Dendritic cell treated with granulocyte-macrophage colony-stimulating factor and Interleukin-4, amounts not matched to agents 40 ng/mL and 50 ng/mL, for 4 days (primary cell): ENCODE measurements at regions of chr3 and their contacts with region 1.

Region 1: DNA sequence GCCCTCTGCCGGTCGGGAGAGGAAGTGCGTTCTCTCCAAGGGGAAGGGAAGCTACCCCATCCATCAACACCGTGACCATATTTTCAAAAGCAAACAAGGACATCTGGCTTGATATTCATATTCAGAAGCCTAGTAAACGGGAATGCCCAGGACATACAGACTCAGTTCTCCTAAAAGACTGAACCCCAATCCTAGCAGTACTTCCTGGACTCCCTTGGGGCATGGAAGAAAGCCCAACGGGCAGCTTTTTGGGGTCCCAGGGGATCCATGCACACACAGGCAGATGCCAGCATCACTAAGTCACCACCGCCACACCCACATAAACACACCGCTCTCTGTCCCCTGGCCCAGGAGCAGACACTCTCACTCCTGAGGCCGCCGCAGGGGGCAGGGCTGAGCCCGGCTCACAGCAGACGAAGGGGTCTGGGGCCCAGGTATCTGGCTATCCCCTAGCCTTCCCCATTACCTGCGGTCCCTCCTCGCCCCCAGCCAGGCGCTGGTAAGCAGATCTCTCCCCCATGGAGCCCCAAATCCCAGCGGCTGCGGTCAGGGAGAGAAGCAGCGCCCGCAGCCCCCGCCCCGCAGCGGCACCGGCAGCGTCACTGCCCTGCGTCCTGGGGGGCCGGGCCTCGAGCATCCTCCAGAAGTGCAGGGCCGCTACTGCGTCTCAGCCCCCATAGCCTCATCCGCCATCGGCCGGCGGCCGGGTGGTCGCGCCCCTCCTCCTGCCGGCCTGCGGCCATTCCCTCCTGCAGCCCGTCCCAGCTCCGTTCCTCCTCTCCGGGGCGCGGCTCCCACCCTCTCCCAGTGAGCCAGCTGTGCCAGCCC is 13.4 kb downstream of the TNK2 start:
- H3K4me3 Mint-ChIP-seq: peak overlapping the region; percentile 84
- H3K27ac Mint-ChIP-seq: peak overlapping the region; percentile 87
- H3K4me1 Mint-ChIP-seq: peaks cover 81% of the 10 kb centered on the region
- H3K27me3 Mint-ChIP-seq: no peaks in the 10 kb centered on the region

Region 2: GRCh38 chr3:195863121-195864006 is 31.6 kb before region 1 on chr3:
- intact Hi-C with region 1: loop called (anchors 1 kb)
- H3K4me3 Mint-ChIP-seq: no peak overlapping the region
- H3K27ac Mint-ChIP-seq: no peak overlapping the region
- H3K4me1 Mint-ChIP-seq: peaks cover 15% of the 10 kb centered on the region
- H3K27me3 Mint-ChIP-seq: peaks cover 16% of the 10 kb centered on the region

Region 3: DNA sequence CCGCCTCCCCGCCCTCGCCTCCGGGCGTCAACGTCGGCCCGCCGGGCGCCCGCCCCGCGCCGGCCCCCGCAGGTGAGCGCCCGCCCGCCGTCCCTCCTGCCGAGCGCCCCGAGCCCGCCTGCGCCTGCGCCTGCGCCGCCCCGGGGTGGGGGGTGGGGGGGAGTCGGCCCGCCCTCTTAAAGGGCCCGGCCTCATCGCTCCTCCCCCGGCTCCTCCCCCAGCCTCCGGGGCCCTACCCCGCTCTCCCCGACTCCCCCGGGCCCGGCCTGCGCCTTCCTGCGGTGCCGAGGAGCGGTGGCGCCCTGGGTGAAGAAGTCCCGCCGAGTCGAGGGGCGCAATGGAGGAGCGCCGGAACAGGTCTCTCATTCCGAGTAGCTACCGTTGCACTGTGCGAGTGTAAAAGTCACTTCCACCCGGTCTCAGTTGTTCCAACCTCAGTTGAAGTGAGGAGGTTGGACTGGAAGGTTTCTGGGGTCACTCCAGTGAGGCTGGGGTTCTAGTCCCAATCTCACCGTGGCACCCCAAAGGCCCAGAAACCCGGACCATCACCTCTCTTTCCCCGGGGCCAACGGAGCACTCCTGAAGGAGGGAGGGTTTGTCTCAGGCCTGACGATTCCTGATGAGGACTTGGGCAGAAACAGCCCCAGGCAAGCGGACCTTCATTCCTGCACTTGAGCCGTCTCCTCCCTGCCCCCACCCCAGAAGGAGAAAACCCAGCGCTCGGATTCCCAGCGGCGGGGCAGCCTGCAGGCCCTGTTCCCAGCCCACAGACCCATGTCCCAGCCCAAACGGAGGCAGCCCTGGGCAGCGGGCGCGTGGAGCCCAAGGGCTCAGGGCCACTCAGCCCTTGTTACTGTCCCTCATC is 14.9 kb after region 1 on chr3:
- intact Hi-C with region 1: loop called (anchors 1 kb)
- H3K4me3 Mint-ChIP-seq: peak overlapping the region; percentile 71
- H3K27ac Mint-ChIP-seq: peak overlapping the region; percentile 66
- H3K4me1 Mint-ChIP-seq: peaks cover 58% of the 10 kb centered on the region
- H3K27me3 Mint-ChIP-seq: peaks cover 3% of the 10 kb centered on the region

Region 4: DNA sequence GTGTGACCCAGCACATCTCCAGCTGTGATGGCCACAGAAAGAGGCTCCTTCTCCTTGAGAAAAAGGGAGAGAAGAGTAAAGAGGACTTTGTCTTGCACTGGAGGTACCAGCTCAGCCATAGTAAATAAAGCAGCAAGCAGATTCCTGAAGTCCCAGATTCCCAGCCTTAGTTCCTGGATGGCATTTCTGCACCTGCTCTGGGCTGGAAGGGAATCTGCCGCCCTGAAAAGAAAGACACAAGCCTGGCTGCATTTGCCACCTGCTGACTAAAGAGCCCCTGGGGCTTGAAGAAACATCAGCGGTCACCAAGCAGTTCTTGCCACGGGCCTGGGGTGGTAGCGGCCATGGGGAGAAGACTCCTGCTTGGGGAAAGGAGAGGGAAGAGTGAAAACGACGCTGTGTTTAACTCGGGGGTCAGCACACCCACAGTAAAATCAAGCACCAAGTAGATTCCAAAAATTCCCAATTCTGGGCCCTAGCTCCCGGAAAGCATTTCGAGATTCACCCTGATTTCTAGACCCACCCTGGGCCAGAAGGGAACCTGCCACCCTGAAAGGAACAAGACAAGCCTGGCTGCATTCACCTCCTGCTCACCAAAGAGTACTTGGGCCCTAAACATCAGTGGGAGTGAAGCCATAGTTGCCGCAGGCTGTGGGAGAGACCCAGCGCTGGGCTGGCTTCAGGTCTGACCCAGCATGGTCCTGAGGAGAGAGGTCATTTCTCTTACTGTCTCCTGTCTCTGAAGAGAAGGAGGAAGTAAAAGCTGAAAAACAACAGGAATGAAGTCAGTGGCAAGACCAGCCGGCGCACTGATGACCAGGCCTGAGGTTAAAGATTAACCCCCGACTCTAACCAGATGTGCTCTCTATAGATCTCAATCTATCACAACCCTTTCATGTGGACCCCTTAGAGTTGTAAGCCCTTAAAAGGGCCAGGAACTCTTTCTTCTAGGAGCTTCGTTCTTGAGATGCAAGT is 37.7 kb after region 1 on chr3:
- intact Hi-C with region 1: no loop called
- H3K4me3 Mint-ChIP-seq: no peak overlapping the region
- H3K27ac Mint-ChIP-seq: no peak overlapping the region
- H3K4me1 Mint-ChIP-seq: peaks cover 16% of the 10 kb centered on the region
- H3K27me3 Mint-ChIP-seq: peaks cover 5% of the 10 kb centered on the region

Region 5: DNA sequence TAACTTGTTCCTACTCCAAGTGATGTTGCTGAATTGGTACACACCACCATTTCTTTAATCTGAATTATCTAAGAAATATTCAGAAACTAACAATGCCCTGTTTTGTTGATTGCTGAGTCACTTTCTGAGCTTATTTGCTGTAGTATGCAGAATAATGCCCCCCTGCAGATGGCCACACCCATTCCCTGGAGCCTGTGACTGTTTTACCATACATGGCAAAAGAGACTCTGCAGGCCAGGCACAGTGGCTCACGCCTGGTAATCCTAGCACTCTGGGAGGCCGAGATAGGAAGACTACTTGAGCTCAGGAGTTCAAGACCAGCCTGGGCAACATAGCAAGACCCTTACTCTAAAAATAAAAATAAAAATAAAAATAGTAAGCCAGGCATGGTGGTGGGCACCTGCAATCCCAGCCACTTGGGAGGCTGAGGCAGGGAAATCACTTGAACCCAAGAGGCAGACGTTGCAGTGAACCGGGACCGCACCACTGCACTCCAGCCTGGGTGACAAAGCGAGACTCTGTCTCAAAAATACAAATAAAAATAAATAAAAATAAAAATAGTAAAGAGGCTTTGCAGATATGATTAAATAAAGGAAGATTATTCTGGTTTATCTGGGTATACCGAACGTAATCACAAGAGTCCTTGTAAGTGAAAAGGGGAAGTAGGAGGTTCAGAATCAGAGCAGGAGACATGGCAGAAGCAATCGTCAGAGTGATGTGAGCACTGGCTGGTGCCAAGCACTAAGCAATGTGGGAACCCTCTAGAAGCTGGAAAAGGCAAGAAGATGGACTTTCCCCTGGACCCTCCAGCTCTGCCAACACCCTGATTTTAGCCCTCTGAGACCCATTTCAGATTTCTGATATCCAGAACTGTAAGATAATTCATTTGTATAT is 373.5 kb after region 1 on chr3:
- intact Hi-C with region 1: no loop called
- H3K4me3 Mint-ChIP-seq: no peak overlapping the region
- H3K27ac Mint-ChIP-seq: peak overlapping the region; percentile 23
- H3K4me1 Mint-ChIP-seq: peaks cover 34% of the 10 kb centered on the region
- H3K27me3 Mint-ChIP-seq: no peaks in the 10 kb centered on the region